ENCODE measurements at regions of chr16 and their contacts with region 1.

Region 1: GRCh38 chr16:30786936-30787612 is at the start of gene ZNF629:
- DNase-seq: peak; percentile 68 to 96 (median 79)

Region 2: DNA sequence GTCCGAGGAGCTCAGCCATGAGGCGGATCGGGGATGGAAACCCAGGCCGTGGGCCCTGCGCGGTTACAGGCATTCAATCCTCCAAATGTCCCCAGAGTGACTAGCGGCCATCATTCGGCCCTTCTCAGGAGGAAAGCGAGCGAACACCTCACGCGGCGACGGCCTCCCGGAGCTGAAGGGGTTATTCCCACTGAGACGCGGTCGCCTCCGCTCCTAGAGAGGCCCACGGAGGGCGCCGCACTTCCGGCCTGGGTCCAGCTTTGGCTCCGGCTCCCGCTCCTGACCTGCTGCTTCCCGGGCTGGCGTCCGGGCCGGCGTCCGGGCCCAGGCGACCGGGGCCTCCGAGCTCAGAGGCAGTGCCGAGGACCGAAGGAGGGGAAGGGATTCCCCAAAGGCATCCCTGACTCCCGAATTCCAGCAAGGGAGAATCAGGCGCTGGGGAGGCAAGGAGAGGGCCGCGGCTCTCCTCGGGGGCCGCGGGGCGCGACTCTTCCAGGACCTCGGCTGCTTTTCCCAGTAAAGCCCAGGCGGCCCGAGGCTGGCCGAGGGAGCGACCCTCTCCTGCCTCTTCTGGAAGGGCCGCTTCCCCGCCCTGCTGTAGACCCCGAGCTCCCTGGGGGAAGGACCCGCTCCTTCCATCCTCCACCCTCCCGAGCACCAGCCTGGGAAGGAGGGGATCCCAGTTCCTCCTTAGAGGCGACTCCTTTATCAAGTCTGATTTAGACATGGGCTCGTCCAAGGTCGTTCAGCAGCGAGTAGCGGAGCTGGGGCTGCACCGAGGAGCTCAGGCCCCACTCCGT is 18.5 kb after region 1 on chr16:
- intact Hi-C with region 1: loop called (anchors 1 kb)
- DNase-seq: peak; percentile 77 to 98 (median 88)

Region 3: DNA sequence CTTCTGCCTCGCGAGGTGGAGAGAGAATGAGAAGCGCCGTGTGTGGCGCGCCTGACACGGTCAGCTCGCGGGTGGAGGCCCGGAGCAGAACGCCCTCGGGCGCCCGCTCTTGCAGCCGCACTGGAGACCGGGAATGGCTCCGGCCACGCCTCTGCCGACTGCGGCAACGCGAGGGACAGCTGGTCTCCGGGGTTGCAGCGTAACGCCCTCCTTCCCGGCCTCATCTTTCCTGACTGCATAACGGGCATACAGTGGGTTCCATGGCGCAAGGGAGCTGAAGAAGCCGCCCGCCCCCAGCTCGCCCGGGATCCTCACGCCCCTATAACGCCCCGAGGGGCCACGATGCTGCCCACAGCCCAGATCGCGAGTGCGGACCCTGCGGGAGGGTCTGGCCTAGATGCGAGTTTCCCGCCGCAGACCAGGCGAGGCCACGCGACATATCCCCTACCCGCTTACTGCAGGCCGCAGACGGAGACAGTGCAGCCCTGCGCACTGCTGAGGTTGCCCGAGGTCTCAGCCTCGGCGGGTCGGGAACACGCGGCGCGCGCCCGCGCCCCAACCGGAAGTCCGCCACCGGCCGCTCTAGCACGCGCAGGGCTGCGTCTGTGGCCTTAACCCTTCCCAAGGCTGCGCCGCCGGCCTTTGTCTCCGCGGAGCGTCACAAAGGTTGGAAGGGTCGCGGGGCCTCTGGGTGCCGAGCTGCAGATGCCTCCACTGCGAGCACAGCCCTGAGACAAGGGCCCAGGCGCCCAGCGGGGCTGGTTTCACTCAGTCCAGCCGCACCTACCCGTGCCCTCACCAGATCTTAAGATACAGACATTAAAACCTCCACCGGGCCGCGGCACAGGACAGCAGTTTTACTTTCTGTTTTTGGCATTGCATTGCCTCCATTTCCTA is 88.0 kb after region 1 on chr16:
- intact Hi-C with region 1: loop called (anchors 2 kb)
- DNase-seq: peak; percentile 83 to 99 (median 91)

Measured in posterior cingulate gyrus (tissue), 11 donors.